Activated CD4-positive, alpha-beta T cell treated with anti-CD3 and anti-CD28 coated beads for 36 hours (primary cell): ENCODE measurements at regions of chr9 and their contacts with region 1.

Region 1: DNA sequence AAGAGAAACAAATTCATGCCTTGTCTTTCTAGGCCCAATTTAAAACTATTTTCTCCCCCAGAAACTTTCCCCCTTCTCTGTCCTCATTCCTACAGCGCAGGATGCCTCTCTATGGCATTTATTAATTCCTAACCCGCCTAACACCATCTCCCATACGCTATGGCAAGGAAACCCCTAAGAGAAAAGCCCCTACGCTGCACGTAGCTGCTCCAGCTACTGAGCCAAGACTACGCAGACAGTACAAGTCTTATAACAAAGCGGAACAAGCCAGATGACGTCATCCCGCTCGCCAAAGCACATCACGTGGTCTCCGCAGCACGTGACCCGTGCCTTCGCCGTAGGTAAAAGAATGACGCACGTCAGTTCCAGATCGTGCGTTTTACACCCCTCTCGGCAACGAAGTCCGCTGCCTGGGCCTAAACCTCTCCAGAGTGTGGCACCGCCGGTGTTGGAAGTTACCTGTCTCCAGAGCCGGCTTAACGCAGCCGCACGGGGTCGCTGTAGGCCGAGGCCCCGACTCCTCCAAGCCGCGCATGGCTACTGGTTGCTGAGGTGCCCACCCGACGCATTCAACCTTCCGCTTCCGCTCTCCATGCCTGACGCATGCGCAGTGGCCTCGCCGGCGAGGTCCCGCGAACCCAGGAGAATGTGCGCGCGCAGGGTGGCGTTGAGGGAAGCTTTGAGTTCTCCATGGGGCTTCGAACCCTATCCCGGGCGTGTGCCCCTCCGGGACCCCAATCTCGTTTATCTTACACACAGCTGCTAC is at the start of gene TRMO:
- DNase-seq: peak; percentile 99
- ATAC-seq: peak; percentile 78
- H3K4me3 Mint-ChIP-seq: peak within 1 kb of the TSS; percentile 82
- H3K27ac Mint-ChIP-seq: peak within 1 kb of the TSS; percentile 99
- H3K4me1 Mint-ChIP-seq: peaks cover 36% of the 10 kb centered on the region
- H3K27me3 Mint-ChIP-seq: no peaks in the 10 kb centered on the region
- total RNA-seq, gene TRMO: 13.9 to 20.7 TPM

Region 2: GRCh38 chr9:97696803-97697601 is 225.1 kb before region 1 on chr9 and contains the start of gene XPA:
- CTCF ChIA-PET with region 1: no interaction called
- POLR2A ChIA-PET with region 1: no interaction called
- intact Hi-C with region 1: loop called in 1 of 2 experiments (anchors 1 kb)
- DNase-seq: peak; percentile 98
- ATAC-seq: peak; percentile 95
- H3K4me3 Mint-ChIP-seq: peak within 1 kb of the TSS; percentile 81
- H3K27ac Mint-ChIP-seq: peak within 1 kb of the TSS; percentile 92
- H3K4me1 Mint-ChIP-seq: peaks cover 45% of the 10 kb centered on the region
- H3K27me3 Mint-ChIP-seq: peaks cover 2% of the 10 kb centered on the region
- total RNA-seq, gene XPA: 8.7 to 11.1 TPM

Region 3: DNA sequence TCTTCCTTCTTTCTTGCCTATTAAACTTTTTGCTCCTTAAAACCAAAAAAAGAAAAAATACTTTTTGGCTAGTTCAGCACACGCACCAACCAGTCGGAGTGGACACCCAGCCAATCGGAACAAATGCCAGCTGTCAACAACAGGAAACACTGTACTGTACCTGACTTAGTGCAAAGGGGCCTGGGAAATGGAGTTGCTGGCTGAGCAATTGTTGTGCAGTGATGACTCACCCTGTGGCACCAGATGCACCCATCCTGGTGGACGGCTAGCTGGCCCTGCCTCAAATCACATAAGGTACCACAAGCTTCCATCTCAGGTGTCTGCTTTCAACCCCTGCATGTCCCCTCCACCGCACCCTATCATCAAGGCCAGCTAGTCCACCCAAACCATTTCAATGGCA is 48.3 kb before region 1 on chr9:
- CTCF ChIA-PET with region 1: no interaction called
- POLR2A ChIA-PET with region 1: no interaction called
- intact Hi-C with region 1: no loop called
- DNase-seq: no peak
- ATAC-seq: peak; percentile 57
- H3K4me3 Mint-ChIP-seq: no peak overlapping the region
- H3K27ac Mint-ChIP-seq: no peak overlapping the region
- H3K4me1 Mint-ChIP-seq: no peaks in the 10 kb centered on the region
- H3K27me3 Mint-ChIP-seq: peaks cover 8% of the 10 kb centered on the region

Region 4: GRCh38 chr9:97938081-97938644 is 16.0 kb after region 1 on chr9 and contains the start of gene HEMGN:
- CTCF ChIA-PET with region 1: interaction called, 64 read pairs
- POLR2A ChIA-PET with region 1: interaction called, 3 read pairs
- intact Hi-C with region 1: no loop called
- DNase-seq: peak; percentile 48
- ATAC-seq: peak; percentile 85
- H3K4me3 Mint-ChIP-seq: peak within 1 kb of the TSS; percentile 38
- H3K27ac Mint-ChIP-seq: peak within 1 kb of the TSS; percentile 75
- H3K4me1 Mint-ChIP-seq: peaks cover 38% of the 10 kb centered on the region
- H3K27me3 Mint-ChIP-seq: no peaks in the 10 kb centered on the region
- total RNA-seq, gene HEMGN: 1.5 to 2.9 TPM

Region 5: GRCh38 chr9:98034593-98035546 is 112.7 kb after region 1 on chr9:
- CTCF ChIA-PET with region 1: interaction called, 9 read pairs
- POLR2A ChIA-PET with region 1: interaction called, 3 read pairs
- intact Hi-C with region 1: loop called (anchors 1 kb)
- DNase-seq: peak; percentile 96
- ATAC-seq: peak; percentile 99
- H3K4me3 Mint-ChIP-seq: no peak overlapping the region
- H3K27ac Mint-ChIP-seq: peak overlapping the region; percentile 21
- H3K4me1 Mint-ChIP-seq: peaks cover 14% of the 10 kb centered on the region
- H3K27me3 Mint-ChIP-seq: no peaks in the 10 kb centered on the region

Region 6: GRCh38 chr9:98118640-98119601 is 196.8 kb after region 1 on chr9 and contains the start of gene TRIM14:
- CTCF ChIA-PET with region 1: no interaction called
- POLR2A ChIA-PET with region 1: no interaction called
- intact Hi-C with region 1: loop called in 1 of 2 experiments (anchors 1 kb)
- DNase-seq: peak; percentile 79
- ATAC-seq: peak; percentile 49
- H3K4me3 Mint-ChIP-seq: peak within 1 kb of the TSS; percentile 75
- H3K27ac Mint-ChIP-seq: peak within 1 kb of the TSS; percentile 91
- H3K4me1 Mint-ChIP-seq: peaks cover 47% of the 10 kb centered on the region
- H3K27me3 Mint-ChIP-seq: no peaks in the 10 kb centered on the region
- total RNA-seq, gene TRIM14: 54.6 to 59.6 TPM

Region 7: GRCh38 chr9:98263482-98264357 is 341.6 kb after region 1 on chr9:
- CTCF ChIA-PET with region 1: interaction called, 3 read pairs
- POLR2A ChIA-PET with region 1: no interaction called
- intact Hi-C with region 1: loop called (anchors 1 to 2 kb)
- DNase-seq: peak; percentile 91
- ATAC-seq: peak; percentile 99
- H3K4me3 Mint-ChIP-seq: no peak overlapping the region
- H3K27ac Mint-ChIP-seq: no peak overlapping the region
- H3K4me1 Mint-ChIP-seq: no peaks in the 10 kb centered on the region
- H3K27me3 Mint-ChIP-seq: no peaks in the 10 kb centered on the region